GM10248 (cell line): ENCODE measurements at regions of chr1 and their contacts with region 1.

Region 1: GRCh38 chr1:225777583-225778336 is at the start of gene SRP9:
- DNase-seq: peak; percentile 98
- CTCF ChIP-seq: peak; percentile 95

Region 2: GRCh38 chr1:225548140-225548857 is 229.5 kb before region 1 on chr1:
- CTCF ChIA-PET with region 1: no interaction called
- POLR2A ChIA-PET with region 1: no interaction called
- DNase-seq: no peak
- CTCF ChIP-seq: no peak

Region 3: GRCh38 chr1:225766967-225767633 is 10.7 kb before region 1 on chr1:
- CTCF ChIA-PET with region 1: interaction called, 57 read pairs
- POLR2A ChIA-PET with region 1: interaction called, 5 read pairs
- DNase-seq: peak; percentile 15
- CTCF ChIP-seq: no peak

Region 4: GRCh38 chr1:225794954-225795353 is 17.2 kb after region 1 on chr1:
- CTCF ChIA-PET with region 1: interaction called, 18 read pairs
- POLR2A ChIA-PET with region 1: interaction called, 4 read pairs
- DNase-seq: no peak
- CTCF ChIP-seq: no peak

Region 5: DNA sequence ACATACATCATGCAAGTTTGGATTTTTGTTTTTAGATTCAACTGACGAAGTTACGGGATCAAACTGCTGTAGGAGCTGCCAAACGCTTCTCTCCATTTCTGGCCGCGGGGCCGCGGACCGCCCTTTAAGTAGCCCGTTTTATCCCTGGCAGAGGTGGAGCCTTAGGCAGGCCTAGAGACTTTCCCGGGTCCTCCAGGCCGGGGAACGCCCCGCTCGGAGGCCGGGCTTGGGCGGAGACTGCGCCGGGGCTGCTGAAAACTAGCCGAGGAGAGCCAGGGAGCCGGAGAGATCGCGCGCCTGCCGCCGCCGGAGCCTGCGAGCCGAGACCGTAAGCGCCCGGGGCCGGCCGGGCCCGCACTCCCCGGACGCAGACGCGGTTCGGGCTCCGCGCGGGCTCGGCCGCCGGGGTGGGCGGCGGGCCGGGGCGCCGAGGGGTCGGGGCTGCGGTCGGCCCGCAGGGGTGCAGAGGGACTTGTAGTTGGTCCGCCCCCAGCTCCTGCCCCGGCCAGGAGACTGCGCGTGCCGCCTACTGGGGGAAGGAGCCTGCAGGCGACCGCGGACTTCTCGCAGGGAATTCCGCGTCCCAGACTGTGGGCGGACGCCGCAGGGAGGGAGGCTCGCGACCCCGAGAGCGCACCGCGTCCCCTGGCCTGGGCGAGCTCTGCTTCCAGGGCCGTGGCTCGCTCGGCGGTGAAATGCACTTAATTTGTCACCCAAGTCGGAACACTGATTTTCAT is 32.2 kb after region 1 on chr1 and contains the start of gene EPHX1:
- CTCF ChIA-PET with region 1: interaction called, 26 read pairs
- POLR2A ChIA-PET with region 1: no interaction called
- DNase-seq: peak; percentile 92
- CTCF ChIP-seq: peak; percentile 39

Region 6: GRCh38 chr1:225825607-225826007 is 47.8 kb after region 1 on chr1:
- CTCF ChIA-PET with region 1: no interaction called
- POLR2A ChIA-PET with region 1: no interaction called
- DNase-seq: no peak
- CTCF ChIP-seq: no peak

Region 7: DNA sequence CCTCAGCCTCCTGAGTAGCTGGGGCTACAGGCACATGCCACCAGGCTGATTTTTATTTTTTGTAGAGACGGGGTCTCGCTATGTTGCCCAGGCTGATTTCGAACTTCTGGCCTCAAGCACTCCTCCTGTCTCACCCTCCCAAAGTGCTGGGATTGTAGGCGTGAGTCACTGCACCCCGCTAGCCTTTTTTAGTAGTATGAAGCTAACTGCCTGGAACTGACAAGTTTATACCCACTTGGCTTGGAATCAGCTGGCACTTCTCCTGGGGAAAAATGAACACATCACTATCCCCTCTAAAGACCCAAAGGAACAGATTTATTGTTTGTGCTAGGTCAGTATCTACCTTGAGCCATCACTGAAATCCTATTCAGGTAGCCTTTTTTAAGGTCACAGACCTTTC is 85.4 kb after region 1 on chr1:
- CTCF ChIA-PET with region 1: no interaction called
- POLR2A ChIA-PET with region 1: no interaction called
- DNase-seq: no peak
- CTCF ChIP-seq: no peak

Region 8: DNA sequence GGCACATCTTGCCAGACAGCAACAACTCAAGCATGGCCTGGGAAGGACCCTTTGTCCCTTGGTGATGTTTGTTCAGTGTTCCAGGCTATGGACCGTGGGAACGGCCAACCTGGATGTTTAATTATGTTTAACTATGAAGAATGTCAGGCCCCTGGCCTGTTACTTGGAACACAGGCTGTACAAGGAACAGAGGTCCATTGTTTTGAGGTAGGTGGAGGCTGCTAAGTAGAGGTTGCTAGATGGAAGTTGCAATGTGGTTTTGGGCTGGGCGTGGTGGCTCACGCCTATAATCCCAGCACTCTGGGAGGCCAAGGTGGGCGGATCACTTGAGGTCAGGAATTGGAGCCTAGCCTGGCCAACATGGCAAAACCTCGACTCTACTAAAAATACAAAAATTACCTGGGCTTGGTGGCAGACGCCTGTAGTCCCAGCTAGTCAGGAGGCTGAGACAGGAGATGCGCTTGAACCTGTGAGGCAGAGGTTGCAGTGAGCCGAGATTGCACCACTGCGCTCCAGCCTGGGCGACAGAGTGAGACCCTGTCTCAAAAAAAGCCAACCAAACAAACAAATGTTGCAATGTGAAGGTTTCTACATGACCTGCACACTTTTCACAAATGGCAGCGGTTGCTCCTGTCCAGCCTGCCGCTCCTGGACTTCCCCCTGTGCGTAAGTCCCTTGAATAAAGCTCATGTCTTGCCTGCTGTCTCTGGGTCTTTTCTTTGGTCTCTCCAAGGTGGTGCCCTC is 113.6 kb after region 1 on chr1:
- CTCF ChIA-PET with region 1: no interaction called
- POLR2A ChIA-PET with region 1: no interaction called
- DNase-seq: no peak
- CTCF ChIP-seq: no peak